ENCODE measurements at regions of chr10 and their contacts with region 1.

Region 1: DNA sequence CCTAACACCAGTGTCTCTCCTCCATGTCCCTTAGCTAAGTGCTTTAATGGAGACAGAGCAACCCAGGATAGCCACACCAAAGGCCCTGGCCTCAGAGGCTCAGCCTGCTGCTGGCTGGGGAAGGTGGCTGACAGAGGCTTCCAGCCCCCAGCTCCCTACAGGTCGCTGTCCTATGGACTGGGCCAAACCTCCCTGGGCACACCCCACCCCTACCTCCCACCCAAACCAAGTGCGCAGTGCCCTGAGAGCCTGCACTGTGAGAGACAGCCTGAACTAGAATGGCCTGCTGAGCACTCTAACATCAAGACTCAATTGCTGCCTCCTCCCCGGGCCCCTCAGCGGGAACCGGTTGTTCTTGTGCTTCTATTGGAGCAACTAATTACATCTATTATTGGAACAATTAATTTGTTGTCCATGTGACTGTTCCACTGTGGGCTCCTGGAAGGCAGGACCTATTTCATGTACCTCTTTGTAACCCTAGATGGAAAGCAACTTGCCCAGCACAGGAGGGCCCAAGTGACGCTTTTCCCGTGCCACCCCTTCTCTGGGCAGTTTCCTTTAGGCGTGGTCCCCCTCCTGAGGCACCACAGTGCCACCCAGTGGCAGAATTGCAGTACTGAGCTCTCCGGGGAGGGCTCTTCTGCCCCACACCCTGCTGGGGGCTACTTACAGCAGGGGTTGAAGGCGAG is 63.6 kb upstream of the WAPL start:
- DNase-seq: peak; percentile 88
- H3K27ac ChIP-seq: no peak overlapping the region
- CTCF ChIP-seq: peak; percentile 91

Region 2: GRCh38 chr10:86399879-86400704 is 185.1 kb before region 1 on chr10:
- CTCF ChIA-PET with region 1: interaction called, 32 read pairs
- POLR2A ChIA-PET with region 1: no interaction called
- DNase-seq: peak; percentile 97
- H3K27ac ChIP-seq: peak overlapping the region; percentile 83
- CTCF ChIP-seq: peak; percentile 93

Region 3: GRCh38 chr10:86481761-86482160 is 103.4 kb before region 1 on chr10:
- CTCF ChIA-PET with region 1: no interaction called
- POLR2A ChIA-PET with region 1: no interaction called
- DNase-seq: no peak
- H3K27ac ChIP-seq: no peak overlapping the region
- CTCF ChIP-seq: no peak

Region 4: DNA sequence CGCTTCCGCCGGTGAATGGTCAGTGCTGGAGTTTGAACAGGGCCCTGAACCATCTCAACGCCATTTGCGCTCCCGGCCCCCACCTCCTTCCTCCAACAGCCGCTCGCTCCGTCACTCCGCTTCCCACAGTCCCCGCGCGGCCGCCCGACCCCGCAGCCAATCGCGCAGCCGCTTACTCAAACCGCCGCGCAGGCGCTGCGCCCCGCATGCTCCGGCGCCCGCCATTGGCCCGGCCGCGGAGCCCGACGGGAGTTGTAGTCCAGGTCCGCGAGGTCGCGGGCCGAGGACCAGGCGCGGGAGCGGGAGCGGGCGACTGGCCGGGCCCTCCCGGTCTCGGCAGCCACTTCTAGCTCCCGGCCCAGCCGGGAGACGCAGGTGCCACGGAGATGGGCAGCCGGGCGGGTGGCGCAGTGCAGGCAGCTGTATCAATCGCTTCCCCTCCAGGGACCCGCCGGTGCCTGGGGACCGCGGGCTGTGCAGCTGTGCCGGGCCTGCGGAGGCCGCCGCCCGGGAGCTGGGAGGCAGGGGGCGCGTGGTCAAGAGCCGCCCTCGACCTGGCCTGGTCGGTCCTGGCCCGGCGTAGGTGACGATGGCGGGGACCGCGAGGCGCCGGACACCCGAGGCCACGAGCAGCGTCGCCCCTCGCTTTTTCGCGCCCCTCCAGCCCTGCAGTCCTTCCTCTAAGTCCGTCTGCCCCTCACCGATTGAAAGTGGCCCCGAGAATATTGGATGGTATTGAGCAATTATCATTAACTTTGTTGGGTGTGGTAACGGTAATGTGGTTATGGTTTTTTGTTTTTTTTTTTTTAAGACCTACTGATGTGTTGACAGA is 63.3 kb before region 1 on chr10 and contains the start of gene WAPL:
- CTCF ChIA-PET with region 1: interaction called, 10 read pairs
- POLR2A ChIA-PET with region 1: no interaction called
- DNase-seq: peak; percentile 100
- H3K27ac ChIP-seq: peak within 1 kb of the TSS; percentile 89
- CTCF ChIP-seq: no peak

Region 5: GRCh38 chr10:86770417-86770960 is 185.3 kb after region 1 on chr10:
- CTCF ChIA-PET with region 1: no interaction called
- POLR2A ChIA-PET with region 1: no interaction called
- DNase-seq: peak; percentile 48
- H3K27ac ChIP-seq: no peak overlapping the region
- CTCF ChIP-seq: no peak